Left cardiac atrium (tissue), 4 donors: ENCODE measurements at regions of chr7 and their contacts with region 1.

Region 1: GRCh38 chr7:129367700-129368388 is 66.4 kb upstream of the STRIP2 start:
- DNase-seq: peak; percentile 76
- ATAC-seq: peak; percentile 90 to 92

Region 2: GRCh38 chr7:129443612-129444011 is 75.8 kb after region 1 on chr7:
- intact Hi-C with region 1: no loop called
- DNase-seq: no peak
- ATAC-seq: peak; percentile 92 to 93

Region 3: GRCh38 chr7:129471402-129471827 is 103.6 kb after region 1 on chr7:
- intact Hi-C with region 1: loop called (anchors 1 to 5 kb)
- DNase-seq: no peak
- ATAC-seq: no peak

Region 4: DNA sequence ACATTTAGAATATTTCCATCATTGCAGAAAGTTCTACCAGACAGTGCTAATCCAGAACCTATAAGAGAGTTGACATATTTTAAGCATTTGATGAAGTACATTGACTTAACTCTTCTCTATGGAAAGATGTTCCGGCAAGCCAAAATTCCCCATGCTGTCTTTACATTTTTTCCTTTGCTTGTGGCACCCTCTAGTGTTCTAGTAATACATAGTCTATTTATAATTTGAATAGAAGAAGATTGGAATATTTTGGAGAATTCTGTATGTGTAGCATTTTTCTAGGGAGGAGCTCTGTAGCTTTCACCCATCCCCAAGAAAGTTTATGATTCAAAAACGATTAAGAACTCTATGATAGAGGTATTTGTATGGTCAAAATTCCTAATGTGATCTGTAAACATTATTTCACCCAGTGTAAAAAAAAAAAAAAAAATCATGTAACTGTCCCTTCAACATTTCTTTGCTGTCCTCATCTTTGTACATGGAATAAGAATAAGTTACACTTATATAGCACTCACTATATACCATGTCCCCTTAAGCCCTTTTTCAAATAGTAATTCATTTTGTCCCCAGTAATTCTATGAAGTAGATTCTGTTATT is 276.9 kb after region 1 on chr7:
- intact Hi-C with region 1: loop called in 1 of 2 experiments (anchors 10 kb)
- DNase-seq: no peak
- ATAC-seq: peak; percentile 36 to 41